AG04449 (cell line): ENCODE measurements at regions of chr18 and their contacts with region 1.

Region 1: DNA sequence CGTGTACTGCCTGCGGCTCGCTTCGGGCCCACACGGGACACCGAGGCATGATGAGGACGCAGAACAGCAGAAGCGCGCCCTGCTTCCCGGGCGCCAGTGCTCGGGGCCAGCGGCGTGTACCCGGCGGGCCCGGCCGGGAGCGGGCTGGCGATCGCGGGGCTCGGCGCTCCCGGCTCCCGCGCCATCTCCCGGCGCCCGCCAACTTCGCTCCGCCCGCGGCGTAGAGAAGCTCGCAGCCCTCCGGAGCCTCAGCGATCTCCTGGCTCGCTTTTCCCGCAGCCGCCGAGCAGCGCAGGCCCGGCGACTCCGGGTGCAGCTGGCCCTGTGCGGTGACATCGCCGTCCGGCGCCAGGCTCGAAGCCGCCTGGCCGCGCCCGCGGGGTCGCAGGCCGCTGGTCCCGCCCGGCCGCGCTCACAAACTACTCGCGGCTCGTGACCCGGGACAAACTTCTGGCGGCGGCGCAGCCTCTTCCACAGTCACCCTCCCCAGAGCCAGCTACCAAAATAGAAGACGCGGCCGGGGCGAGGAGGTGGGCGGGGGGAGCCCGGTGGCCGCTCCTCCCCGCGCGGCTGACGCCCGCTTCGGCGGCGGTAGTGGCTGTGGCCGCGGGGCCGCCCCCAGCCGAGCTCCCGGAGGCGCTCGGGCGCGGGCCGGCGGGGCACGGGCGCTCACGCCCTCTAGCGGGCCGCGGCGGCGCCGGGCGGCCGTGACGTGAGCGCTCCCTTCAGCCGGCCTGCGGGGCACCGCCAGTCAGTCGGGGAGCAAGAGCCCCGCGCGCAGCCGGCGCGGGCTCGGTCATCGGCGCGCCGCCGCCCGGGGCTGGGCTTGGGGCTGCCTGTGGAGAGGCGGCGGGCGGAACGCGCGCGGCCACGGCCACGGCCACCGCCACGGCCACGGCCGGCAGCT is at the start of gene PTPRM:
- DNase-seq: no peak
- H3K4me3 ChIP-seq: peak within 1 kb of the TSS; percentile 77
- CTCF ChIP-seq: peak; percentile 39

Region 2: GRCh38 chr18:7272311-7273049 is 294.3 kb before region 1 on chr18:
- CTCF ChIA-PET with region 1: interaction called, 11 read pairs
- POLR2A ChIA-PET with region 1: interaction called, 3 read pairs
- DNase-seq: no peak
- H3K4me3 ChIP-seq: no peak overlapping the region
- CTCF ChIP-seq: peak; percentile 46

Region 3: DNA sequence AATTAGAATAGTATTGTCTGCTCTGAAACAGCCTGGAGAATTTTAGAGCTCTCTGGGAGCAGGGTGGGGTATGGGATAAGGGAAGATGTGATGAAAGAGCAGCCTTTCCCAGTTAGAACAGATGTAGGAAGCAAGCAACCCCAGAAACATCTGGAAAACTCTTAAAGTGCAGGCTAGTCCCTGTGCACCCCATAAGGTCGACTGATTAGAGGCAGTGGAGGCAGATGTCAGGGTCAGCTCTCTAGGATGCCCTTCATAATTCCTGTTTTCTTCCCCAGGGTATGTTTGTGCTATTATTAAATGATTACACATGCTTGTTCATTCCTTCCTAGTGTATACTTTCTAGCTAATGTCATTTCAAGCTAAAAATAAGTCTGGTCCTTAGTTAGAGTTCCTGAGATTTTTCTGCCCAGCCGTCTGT is 42.0 kb after region 1 on chr18:
- CTCF ChIA-PET with region 1: interaction called, 13 read pairs
- POLR2A ChIA-PET with region 1: interaction called, 13 read pairs
- DNase-seq: no peak
- H3K4me3 ChIP-seq: no peak overlapping the region
- CTCF ChIP-seq: no peak

Region 4: DNA sequence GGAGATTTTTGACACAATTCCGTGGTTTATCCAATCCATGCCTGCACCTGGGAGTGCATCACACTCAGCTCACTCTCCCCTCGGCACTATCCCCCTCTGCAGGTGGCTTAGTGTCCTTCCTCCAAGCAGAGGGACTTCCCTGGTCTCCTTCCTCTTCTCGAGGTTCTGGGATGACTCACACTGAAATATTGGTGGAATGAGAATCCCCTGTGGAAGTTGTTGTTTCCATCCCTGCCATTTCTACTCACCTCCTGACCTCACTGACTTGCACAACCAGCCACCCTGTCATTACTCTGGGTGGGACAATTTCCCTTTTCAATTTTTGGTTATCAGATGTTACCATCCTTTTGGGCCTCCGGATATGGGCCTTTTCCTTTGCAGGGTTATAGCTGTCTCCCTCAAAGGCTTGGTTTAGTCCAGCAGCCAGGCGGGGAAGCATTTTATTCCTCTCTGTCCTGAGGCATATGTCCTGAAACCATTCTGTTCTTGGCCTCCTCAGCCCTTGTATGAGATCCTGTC is 60.2 kb after region 1 on chr18:
- CTCF ChIA-PET with region 1: interaction called, 36 read pairs
- POLR2A ChIA-PET with region 1: no interaction called
- DNase-seq: no peak
- H3K4me3 ChIP-seq: no peak overlapping the region
- CTCF ChIP-seq: peak; percentile 23

Region 5: DNA sequence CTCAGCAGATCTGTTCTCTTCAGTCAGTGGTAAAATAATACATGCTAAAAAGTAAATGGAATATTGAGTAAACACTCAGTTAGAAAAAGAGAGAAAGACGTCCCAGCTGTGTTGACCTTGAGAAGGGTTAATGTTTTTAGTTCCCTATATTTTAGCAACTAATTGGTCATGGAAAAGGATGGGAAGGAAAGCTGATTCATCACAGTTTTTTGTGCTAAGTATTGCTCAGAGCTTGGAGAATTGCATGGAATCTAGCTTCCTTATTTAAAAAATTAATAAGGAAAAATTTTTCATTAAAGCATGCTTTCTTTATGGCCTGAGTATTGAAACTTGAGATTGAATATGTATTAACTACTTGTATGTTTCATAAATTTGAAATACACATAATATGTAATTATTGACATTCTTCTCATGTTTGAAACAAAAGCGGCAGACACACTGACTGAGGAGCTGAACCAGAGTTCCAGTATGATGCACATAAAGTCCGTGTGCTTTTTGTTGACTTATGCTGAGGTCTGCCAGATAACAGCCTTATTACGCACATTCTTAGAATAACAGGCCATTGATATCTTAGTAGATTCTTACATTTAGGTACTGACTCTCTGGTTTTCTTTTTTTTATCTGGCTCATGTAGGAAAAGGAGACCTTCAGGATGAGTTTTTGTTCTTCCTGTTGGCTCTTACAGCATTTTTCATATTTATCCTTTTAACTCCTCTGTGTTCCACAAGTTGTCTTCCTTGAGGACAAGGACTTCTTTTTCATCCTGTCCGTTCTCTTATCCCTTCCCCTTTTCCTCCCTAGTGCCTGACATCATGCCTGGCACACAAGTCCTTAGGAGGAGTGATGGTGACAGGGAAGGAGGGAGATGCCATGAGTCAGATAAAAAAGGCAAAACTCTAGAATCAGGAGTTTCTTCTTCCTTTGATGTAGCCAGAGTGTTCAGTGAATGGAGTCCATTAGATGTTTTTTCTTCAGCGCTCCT is 194.4 kb after region 1 on chr18:
- CTCF ChIA-PET with region 1: interaction called, 15 read pairs
- POLR2A ChIA-PET with region 1: no interaction called
- DNase-seq: no peak
- H3K4me3 ChIP-seq: no peak overlapping the region
- CTCF ChIP-seq: no peak

Region 6: GRCh38 chr18:7789856-7790552 is 223.2 kb after region 1 on chr18:
- CTCF ChIA-PET with region 1: interaction called, 10 read pairs
- POLR2A ChIA-PET with region 1: no interaction called
- DNase-seq: no peak
- H3K4me3 ChIP-seq: no peak overlapping the region
- CTCF ChIP-seq: peak; percentile 46

Region 7: DNA sequence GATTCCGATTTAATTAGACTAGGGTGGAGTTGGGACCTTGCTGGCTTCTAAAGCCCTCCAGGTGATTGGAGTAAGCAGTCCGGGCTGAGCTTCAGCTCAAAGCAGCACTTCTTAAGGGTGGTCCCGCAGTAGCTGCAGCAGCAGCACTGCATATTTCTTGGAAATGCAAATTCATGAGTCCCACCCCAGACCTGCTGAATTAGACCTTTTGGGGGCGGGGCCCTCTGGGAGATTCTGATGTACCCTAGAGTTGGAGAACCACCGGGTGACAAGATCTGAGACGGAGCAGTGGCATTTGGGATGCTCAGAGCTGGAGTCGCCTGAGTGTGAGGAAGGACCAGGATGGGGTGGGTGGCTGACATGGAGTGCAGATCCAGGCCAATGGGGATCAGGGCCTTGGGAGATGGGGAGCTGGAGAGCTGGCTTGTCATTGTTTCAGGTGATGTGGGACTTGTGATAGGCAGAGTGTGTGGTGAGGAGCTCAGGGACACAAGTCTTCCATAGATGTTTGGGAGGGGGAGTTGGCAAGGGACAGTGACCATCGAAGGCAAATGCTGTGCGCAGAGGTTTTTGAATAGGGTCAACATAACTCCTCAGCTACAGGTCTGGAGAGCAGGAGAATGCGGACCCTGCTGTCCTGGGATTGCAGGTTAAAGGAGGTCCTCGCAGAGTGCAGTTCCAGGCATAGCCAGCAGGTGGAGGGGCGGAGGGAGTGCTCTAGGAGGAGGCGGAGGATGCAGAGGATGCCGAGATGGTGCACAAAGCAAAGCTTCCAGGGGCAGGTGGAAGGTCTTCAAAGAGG is 911.5 kb after region 1 on chr18:
- CTCF ChIA-PET with region 1: interaction called, 19 read pairs
- POLR2A ChIA-PET with region 1: no interaction called
- DNase-seq: no peak
- H3K4me3 ChIP-seq: no peak overlapping the region
- CTCF ChIP-seq: peak; percentile 98